ENCODE measurements at regions of chr2 and their contacts with region 1.

Region 1: DNA sequence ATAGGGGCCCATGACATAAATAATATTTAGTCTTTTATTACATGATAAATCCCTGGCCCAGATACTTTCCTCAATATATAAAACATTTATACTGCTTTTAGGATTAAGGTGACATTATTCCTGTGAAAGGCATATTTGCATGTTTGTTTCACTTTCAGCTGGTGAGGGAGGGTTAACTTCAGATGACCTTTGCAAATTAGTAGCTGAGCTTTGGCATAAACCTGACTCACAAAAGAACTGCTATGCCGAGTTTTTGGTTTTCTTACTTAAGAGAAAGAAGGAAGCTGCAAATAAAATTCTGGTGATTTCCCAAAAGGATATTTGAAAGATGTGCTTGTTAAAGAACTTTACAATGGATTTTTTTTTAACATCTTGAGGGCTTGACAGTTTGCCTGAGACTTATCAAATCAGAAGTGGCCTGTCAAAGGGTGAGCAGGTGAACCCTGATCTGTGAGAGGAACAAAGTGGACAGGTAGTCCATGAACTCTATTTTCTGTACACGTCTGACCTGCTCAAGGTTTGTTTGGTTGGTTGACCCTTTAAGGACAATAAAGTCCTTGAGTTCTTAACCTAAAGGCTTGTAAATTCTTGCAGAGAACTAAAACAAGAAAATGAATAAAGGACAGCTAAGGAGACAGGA is 93.5 kb downstream of the FAM124B start:
- DNase-seq: no peak
- H3K4me3 ChIP-seq: no peak overlapping the region
- H3K4me3 Mint-ChIP-seq: no peak overlapping the region
- H3K27ac Mint-ChIP-seq: no peak overlapping the region
- H3K4me1 ChIP-seq: no peaks in the 10 kb centered on the region
- H3K4me1 Mint-ChIP-seq: no peaks in the 10 kb centered on the region
- H3K27me3 ChIP-seq: peaks cover 2% of the 10 kb centered on the region; the same call in 1 of the 2 replicates
- H3K27me3 Mint-ChIP-seq: peaks cover 27% of the 10 kb centered on the region
- CTCF ChIP-seq: no peak

Region 2: DNA sequence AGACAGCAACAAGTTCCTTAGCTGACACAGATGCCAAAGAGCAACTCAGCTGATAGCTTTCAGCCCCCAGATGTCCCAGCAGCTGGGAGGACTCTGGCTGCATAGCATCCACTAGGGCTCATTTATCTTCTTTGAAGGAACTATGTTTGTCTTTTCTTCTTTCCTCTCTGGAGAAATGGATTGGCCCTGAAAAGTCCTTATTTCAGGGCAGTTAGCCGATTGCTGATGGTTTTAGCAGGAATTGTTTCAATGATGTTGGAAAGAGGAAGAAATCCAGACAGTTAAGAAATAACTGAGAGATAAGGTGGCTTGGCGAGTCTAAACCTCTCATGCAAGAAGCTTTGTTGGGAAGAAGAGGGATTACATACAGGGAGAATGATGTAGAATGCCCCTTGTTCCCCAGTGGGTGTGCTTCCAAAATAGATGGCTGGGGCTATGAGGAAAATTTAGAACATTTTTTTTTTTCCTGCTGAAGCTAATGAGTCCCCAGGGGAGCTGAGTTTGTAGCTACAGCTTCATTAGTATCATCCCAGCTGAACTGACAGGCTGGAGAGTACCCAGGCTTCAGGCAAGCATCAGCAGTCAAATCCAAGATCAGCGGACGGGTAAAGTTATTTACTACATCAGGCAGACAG is 235.7 kb before region 1 on chr2:
- CTCF ChIA-PET with region 1: no interaction called
- POLR2A ChIA-PET with region 1: interaction called, 11 read pairs
- intact Hi-C with region 1: no loop called
- DNase-seq: no peak
- H3K4me3 ChIP-seq: no peak overlapping the region
- H3K4me3 Mint-ChIP-seq: no peak overlapping the region
- H3K27ac Mint-ChIP-seq: no peak overlapping the region
- H3K4me1 ChIP-seq: no peaks in the 10 kb centered on the region
- H3K4me1 Mint-ChIP-seq: no peaks in the 10 kb centered on the region
- H3K27me3 ChIP-seq: no peaks in the 10 kb centered on the region; the same call in 1 of the 2 replicates
- H3K27me3 Mint-ChIP-seq: peaks cover 8% of the 10 kb centered on the region
- CTCF ChIP-seq: no peak

Measured in Caco-2 (cell line).